Activated CD4-positive, alpha-beta memory T cell treated with anti-CD3 and anti-CD28 coated beads for 36 hours (primary cell): ENCODE measurements at regions of chr1 and their contacts with region 1.

Region 1: DNA sequence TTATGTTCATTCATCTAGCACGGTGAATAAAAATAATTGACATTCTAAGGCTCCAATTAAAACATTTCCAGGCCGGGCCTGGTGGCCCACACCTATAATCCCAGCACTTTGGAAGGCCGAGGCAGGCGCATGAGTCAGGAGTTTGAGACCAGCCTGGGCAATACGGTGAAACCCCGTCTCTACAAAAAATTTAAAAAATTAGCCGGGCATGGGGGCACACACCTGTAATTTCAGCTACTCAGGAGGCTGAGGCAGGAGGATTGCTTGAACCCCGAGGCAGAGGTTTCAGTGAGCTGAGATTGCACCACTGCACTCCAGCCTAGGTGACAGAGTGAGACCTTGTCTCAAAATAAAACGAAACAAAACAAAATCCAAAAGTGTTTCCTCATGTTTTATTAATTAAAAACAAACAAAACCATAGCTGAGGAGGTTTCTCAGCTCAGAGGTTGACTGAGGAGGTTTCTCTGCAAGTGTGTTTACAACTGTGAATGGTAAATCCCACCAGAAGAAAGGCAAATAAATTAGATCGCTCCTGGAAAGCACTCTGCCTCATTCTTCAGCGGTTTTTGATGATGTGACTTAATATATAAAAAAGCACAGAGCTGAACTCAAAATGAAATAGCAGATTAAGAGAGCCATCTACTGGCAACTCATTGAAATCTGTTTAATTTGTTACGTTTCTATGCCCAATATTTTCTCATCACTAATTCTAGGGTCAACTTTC is 37.7 kb upstream of the ATG4C start:
- DNase-seq: no peak
- H3K4me3 Mint-ChIP-seq: no peak overlapping the region
- H3K27ac Mint-ChIP-seq: no peak overlapping the region
- H3K4me1 Mint-ChIP-seq: no peaks in the 10 kb centered on the region
- H3K27me3 Mint-ChIP-seq: peaks cover 4% of the 10 kb centered on the region

Region 2: DNA sequence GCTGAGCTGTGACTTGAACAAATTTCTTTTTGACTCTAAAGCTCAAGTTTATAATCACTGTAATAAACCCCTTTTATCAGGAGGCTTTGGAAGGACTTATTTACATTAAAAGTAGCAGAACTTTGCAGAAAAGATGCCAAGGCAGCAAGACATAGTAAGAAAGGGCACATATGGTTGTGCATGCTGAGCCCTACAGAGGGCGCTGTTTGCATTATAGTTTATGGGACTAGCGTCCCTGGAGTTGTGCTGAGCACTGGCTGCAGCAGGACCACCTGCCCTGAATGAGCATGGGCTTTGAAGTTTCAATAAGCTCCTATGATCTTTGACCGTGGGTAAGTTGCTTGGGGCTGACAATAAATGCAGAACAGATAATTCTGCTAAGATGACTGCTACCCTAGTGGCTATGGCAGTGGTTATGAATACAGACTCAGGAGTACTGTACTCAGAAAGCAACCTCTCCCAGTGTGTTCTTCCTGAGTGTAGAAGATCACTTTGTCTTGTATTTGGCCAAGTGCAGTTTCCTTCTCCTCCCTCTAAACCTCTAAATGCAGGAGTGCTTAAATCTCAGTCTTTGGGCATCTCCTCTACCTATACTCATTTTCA is 354.8 kb before region 1 on chr1:
- CTCF ChIA-PET with region 1: interaction called, 3 read pairs
- POLR2A ChIA-PET with region 1: no interaction called
- intact Hi-C with region 1: loop called (anchors 2 kb)
- DNase-seq: peak; percentile 41
- H3K4me3 Mint-ChIP-seq: no peak overlapping the region
- H3K27ac Mint-ChIP-seq: no peak overlapping the region
- H3K4me1 Mint-ChIP-seq: no peaks in the 10 kb centered on the region
- H3K27me3 Mint-ChIP-seq: no peaks in the 10 kb centered on the region

Region 3: DNA sequence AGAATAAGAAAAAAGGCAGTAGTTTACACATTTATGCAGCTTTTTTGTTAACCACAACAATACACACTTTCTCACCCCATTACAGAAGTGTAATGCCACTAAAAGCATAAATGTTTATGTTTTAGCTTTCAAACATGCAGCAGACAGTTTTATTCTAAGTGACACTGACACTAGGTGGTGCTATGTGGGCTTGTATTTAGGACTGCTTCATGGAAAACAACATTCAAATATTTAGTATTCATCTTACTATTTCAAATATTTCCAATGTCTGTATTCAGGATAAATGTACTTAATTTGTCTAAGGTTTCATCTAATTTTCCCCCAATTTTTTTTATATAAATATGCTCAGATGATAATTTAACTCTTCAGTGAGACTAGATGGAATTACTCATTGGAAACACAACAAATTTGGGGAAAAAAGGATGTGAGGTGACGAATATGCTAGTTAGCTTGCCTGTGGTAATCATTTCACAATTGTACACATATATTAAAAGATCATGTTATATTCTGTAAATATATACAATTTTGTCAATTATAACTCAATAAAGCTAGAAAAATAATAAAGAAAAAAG is 238.0 kb before region 1 on chr1:
- CTCF ChIA-PET with region 1: interaction called, 75 read pairs
- POLR2A ChIA-PET with region 1: no interaction called
- intact Hi-C with region 1: loop called (anchors 1 kb)
- DNase-seq: no peak
- H3K4me3 Mint-ChIP-seq: no peak overlapping the region
- H3K27ac Mint-ChIP-seq: no peak overlapping the region
- H3K4me1 Mint-ChIP-seq: no peaks in the 10 kb centered on the region
- H3K27me3 Mint-ChIP-seq: no peaks in the 10 kb centered on the region

Region 4: GRCh38 chr1:62589321-62589720 is 156.9 kb before region 1 on chr1:
- CTCF ChIA-PET with region 1: no interaction called
- POLR2A ChIA-PET with region 1: no interaction called
- intact Hi-C with region 1: no loop called
- DNase-seq: no peak
- H3K4me3 Mint-ChIP-seq: no peak overlapping the region
- H3K27ac Mint-ChIP-seq: no peak overlapping the region
- H3K4me1 Mint-ChIP-seq: no peaks in the 10 kb centered on the region
- H3K27me3 Mint-ChIP-seq: no peaks in the 10 kb centered on the region